ENCODE measurements at regions of chr5 and their contacts with region 1.

Region 1: DNA sequence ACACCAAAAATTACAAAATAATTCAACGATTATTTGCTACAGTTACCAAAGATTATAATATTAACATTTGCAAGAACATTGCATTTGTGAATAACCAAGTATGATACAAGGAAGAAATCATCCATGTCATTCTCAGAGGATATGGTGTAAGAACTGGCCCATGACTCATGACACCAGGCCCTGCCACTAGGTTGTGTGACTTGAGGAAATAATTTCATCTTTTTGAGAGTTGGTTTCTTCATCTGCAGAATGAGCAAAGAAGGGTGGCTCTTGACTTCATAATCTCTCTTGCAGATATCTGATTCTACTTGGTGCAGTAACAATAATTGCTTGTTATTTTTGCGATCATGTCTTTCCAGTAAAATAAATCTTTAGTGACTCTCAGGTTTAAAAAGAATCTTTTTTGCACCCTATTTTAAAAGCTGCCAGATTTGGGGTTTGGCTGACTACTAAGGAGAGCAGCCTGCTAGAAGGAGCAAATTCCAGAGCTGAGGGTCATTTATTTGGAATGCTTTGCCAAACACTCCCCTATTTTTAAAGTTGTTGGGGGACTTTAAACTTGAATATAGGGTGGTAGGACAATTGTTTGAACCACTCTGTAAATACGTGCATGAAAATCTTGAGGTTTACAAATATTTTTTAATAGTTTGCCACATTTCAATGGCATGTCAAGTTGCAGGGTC is 23.5 kb downstream of the ITGA1 start:
- DNase-seq: peak; percentile 77
- ATAC-seq: peak; percentile 13; the same call in 1 of the 2 replicates
- H3K4me3 ChIP-seq: no peak overlapping the region
- H3K27ac ChIP-seq: peak overlapping the region; percentile 43; the same call in 1 of the 2 replicates
- H3K4me1 ChIP-seq: peaks cover 24% of the 10 kb centered on the region
- H3K27me3 ChIP-seq: no peaks in the 10 kb centered on the region
- CTCF ChIP-seq: no peak
- POLR2A ChIP-seq: no peak
- RAD21 ChIP-seq: no peak

Region 2: DNA sequence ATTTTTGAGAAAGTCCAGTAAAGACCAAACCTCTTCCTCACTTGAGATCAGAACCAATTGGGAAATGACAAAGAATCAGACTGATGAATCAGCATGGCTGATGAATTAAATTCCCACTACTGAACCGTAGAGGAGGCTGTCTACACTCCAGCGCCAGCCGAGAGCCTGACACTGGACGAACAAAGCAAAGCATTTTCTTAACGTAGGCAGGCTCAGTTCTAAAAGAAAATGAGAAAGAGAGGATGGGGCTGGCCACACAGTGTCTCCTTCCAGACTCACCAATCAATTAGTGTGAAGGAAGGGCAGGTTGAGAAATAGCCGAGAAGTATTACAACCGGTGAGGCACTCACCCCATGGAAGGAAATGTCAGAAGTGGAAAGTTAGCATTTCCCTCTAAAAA is 25.9 kb after region 1 on chr5:
- CTCF ChIA-PET with region 1: interaction called, 5 read pairs
- POLR2A ChIA-PET with region 1: no interaction called
- dilution Hi-C with region 1: no loop called
- in situ Hi-C with region 1: no loop called
- intact Hi-C with region 1: loop called (anchors 2 kb)
- DNase-seq: peak; percentile 73
- ATAC-seq: peak; percentile 60
- H3K4me3 ChIP-seq: peak overlapping the region; percentile 4; the same call in 1 of the 2 replicates
- H3K27ac ChIP-seq: peak overlapping the region; percentile 94
- H3K4me1 ChIP-seq: peaks cover 16% of the 10 kb centered on the region
- H3K27me3 ChIP-seq: no peaks in the 10 kb centered on the region
- CTCF ChIP-seq: peak; percentile 34; the same call in 1 of the 2 replicates
- POLR2A ChIP-seq: peak; percentile 53
- RAD21 ChIP-seq: peak; percentile 45; the same call in 1 of the 2 replicates

Measured in IMR-90 (cell line).